PC-9 (cell line): ENCODE measurements at regions of chr5 and their contacts with region 1.

Region 1: GRCh38 chr5:149551200-149552037 is at the start of gene CSNK1A1:
- DNase-seq: peak; percentile 93 to 99
- H3K4me3 ChIP-seq: peak within 1 kb of the TSS; percentile 82
- H3K27ac ChIP-seq: peak within 1 kb of the TSS; percentile 86
- H3K4me1 ChIP-seq: peaks cover 57% of the 10 kb centered on the region
- H3K27me3 ChIP-seq: no peaks in the 10 kb centered on the region
- CTCF ChIP-seq: peak; percentile 88
- total RNA-seq, gene CSNK1A1: 300 and 334 TPM in 2 replicates

Region 2: DNA sequence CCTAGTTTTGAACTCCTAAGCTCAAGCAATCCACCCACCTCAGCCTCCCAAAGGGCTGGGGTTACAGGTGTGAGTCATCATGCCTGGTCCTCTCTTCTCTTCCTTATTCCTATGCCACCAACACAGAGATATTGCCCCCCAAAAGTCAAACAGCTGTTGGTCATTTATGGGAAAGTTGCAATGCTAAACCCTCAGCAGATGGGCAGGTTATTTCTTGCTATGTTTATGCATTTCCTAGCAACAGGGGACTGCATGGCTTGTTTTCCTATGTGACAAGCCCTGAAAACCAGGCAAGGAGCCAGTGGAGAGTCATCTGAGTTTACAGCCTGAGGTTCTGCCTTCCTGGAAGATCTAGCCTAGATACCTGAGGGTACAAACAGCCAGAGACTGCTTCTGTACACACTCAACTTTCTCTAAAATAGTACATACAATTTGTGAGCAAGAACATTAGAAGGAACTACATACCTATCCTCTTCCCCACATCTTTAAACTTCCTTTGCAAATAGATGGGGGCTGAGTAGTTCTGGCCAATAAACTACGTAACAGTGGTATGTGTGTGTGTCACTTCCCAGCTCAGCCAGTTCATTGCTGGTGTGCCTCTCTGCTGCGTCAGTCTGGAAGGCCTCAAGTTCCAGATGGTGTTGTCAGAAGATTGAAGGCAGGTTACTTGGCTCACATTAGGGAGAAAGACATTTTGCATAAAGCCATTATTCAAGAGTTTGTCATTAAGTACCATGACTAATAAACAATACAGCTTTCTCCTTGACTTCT is 65.6 kb before region 1 on chr5:
- CTCF ChIA-PET with region 1: no interaction called
- POLR2A ChIA-PET with region 1: no interaction called
- intact Hi-C with region 1: loop called (anchors 2 kb)
- DNase-seq: peak; percentile 89 to 99
- H3K4me3 ChIP-seq: no peak overlapping the region
- H3K27ac ChIP-seq: peak overlapping the region; percentile 92
- H3K4me1 ChIP-seq: peaks cover 88% of the 10 kb centered on the region
- H3K27me3 ChIP-seq: no peaks in the 10 kb centered on the region
- CTCF ChIP-seq: no peak

Region 3: DNA sequence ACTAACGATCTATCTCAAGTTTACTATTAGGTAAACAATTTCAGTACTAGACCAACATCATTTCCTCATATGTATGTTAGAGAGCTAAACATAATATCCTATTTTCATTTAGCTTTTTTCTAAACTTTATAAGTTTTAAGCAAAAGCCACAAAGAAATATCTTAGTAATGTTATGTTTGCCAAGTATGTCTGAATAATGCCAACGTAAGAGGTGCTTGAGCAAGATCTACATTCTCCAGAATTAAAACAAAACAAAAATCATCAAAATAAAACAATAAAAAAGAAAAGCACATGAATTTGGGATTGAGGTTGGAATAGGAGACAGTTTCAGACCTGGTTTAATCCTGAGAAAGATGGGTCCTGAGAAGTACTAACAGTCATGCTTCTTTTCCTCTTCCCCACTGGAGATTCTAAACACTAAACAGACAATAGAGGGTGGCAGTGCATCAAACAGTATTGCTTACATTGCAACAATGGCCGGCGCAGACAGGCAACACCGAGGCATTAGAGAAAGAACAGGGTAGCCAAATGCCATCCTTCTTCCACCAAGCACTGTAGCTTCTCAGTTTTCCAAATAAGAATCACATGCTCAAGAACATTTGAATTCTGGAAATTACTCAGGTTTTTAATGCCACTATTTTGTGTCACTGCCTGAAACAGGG is 33.8 kb before region 1 on chr5:
- CTCF ChIA-PET with region 1: interaction called, 3 read pairs
- POLR2A ChIA-PET with region 1: interaction called, 11 read pairs
- intact Hi-C with region 1: no loop called
- DNase-seq: no peak
- H3K4me3 ChIP-seq: no peak overlapping the region
- H3K27ac ChIP-seq: peak overlapping the region; percentile 6; the same call in 1 of the 2 replicates
- H3K4me1 ChIP-seq: no peaks in the 10 kb centered on the region
- H3K27me3 ChIP-seq: no peaks in the 10 kb centered on the region
- CTCF ChIP-seq: no peak

Region 4: GRCh38 chr5:149540089-149540488 is 11.3 kb before region 1 on chr5:
- CTCF ChIA-PET with region 1: no interaction called
- POLR2A ChIA-PET with region 1: interaction called, 11 read pairs
- intact Hi-C with region 1: no loop called
- DNase-seq: no peak
- H3K4me3 ChIP-seq: no peak overlapping the region
- H3K27ac ChIP-seq: no peak overlapping the region
- H3K4me1 ChIP-seq: peaks cover 5% of the 10 kb centered on the region
- H3K27me3 ChIP-seq: no peaks in the 10 kb centered on the region
- CTCF ChIP-seq: no peak